Naive thymus-derived CD4-positive, alpha-beta T cell (primary cell): ENCODE measurements at regions of chr6 and their contacts with region 1.

Region 1: DNA sequence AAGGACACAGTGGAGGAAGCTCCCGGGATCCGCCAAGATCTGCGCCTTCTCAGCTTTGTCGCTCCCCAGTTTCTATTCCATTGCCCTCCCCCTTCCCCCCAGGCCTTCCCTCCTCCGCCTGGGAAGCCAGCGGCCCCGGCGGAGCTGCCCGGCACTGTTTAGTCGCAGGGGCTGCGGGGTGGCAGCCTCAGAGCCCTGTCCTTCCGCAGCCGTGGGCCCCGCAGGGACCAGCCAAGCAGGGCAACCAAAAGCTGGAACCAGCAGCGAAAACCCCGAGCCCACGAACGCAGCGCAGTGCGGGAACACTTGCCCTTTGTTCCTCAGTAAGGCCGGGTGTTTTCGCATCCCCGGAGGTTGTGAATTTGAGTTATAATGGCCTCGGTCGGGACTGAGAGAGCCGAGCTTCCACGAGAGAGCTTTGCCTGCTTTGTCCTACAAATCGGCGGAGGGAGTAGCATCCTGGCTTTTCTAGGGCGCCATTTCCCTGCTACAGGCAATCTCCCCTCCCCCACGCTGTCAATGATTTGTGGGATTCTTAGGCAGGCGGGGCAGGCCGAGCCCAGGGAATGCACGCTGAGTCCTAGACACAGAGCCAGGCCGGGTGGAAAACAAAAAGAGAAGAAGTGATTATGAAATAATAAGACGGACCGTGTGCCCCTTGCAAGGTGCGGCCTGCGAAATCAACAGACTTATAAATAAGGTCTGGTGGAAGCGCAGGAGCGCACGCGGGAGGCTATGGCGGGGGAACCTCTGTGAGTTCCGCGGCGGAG is 4.0 kb upstream of the TUBB2B start:
- DNase-seq: peak in 2 of 9 donors; percentile 11 to 20
- ATAC-seq: no peak
- H3K4me3 ChIP-seq: peak overlapping the region; percentile 38
- H3K4me3 Mint-ChIP-seq: peak overlapping the region; percentile 26 to 92 (median 67)
- H3K27ac ChIP-seq: no peak overlapping the region
- H3K27ac Mint-ChIP-seq: no peak overlapping the region
- H3K4me1 ChIP-seq: peaks cover 38 to 45% of the 10 kb centered on the region in 2 donors
- H3K4me1 Mint-ChIP-seq: peaks cover 25 to 61% (median 42%) of the 10 kb centered on the region in 7 donors
- H3K27me3 ChIP-seq: peaks cover 26 to 49% of the 10 kb centered on the region in 2 donors
- H3K27me3 Mint-ChIP-seq: peaks cover 73 to 91% (median 88%) of the 10 kb centered on the region in 5 donors

Region 2: DNA sequence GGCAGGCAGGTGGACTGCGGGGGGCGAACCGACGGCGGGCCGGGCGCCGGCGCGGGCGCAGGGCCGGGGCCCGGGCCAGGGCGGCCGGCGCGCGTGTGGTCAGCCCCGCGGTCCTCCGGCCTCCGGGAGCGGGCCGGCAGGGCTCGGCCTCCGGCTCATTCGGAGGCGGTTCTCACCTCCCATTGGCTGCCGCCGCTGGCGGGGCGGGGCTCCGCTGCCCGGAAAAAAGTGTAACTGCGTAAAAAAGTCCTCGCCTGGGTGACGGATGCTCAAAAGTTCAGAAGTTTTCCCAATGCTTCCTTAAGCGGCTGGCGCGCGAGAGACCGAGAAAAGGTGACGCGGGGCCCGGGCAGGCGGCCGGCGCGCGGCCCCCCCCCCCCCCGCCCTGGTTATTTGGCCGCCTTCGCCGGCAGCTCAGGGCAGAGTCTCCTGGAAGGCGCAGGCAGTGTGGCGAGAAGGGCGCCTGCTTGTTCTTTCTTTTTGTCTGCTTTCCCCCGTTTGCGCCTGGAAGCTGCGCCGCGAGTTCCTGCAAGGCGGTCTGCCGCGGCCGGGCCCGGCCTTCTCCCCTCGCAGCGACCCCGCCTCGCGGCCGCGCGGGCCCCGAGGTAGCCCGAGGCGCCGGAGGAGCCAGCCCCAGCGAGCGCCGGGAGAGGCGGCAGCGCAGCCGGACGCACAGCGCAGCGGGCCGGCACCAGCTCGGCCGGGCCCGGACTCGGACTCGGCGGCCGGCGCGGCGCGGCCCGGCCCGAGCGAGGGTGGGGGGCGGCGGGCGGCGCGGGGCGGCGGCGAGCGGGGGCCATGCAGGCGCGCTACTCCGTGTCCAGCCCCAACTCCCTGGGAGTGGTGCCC is 1621.6 kb before region 1 on chr6 and contains the start of gene FOXC1:
- CTCF ChIA-PET with region 1: no interaction called
- POLR2A ChIA-PET with region 1: no interaction called
- intact Hi-C with region 1: loop called in 1 of 2 experiments (anchors 2 kb)
- DNase-seq: peak in 1 of 9 donors; percentile 61
- ATAC-seq: peak; percentile 54
- H3K4me3 ChIP-seq: peak within 1 kb of the TSS; percentile 26
- H3K4me3 Mint-ChIP-seq: peak within 1 kb of the TSS; percentile 75 to 88 (median 82)
- H3K27ac ChIP-seq: no peak within 1 kb of the TSS
- H3K27ac Mint-ChIP-seq: peak within 1 kb of the TSS in 1 of 9 donors; percentile 84
- H3K4me1 ChIP-seq: peaks cover 22 to 27% of the 10 kb centered on the region in 2 donors
- H3K4me1 Mint-ChIP-seq: peaks cover 35 to 65% (median 55%) of the 10 kb centered on the region in 7 donors
- H3K27me3 ChIP-seq: peaks cover 20 to 36% of the 10 kb centered on the region in 2 donors
- H3K27me3 Mint-ChIP-seq: peaks cover 55 to 67% (median 65%) of the 10 kb centered on the region in 5 donors
- total RNA-seq, gene FOXC1: not detected

Region 3: GRCh38 chr6:3068329-3069214 is 162.9 kb before region 1 on chr6 and contains the start of gene RIPK1:
- CTCF ChIA-PET with region 1: no interaction called
- POLR2A ChIA-PET with region 1: no interaction called
- intact Hi-C with region 1: no loop called
- DNase-seq: peak; percentile 92 to 98 (median 95)
- ATAC-seq: peak; percentile 88
- H3K4me3 ChIP-seq: peak within 1 kb of the TSS; percentile 86
- H3K4me3 Mint-ChIP-seq: peak within 1 kb of the TSS; percentile 91 to 99 (median 96)
- H3K27ac ChIP-seq: peak within 1 kb of the TSS; percentile 99
- H3K27ac Mint-ChIP-seq: peak within 1 kb of the TSS; percentile 92 to 99 (median 98)
- H3K4me1 ChIP-seq: peaks cover 23% of the 10 kb centered on the region in 2 donors
- H3K4me1 Mint-ChIP-seq: peaks cover 41 to 83% (median 69%) of the 10 kb centered on the region in 7 donors
- H3K27me3 ChIP-seq: no peaks in the 10 kb centered on the region
- H3K27me3 Mint-ChIP-seq: no peaks in the 10 kb centered on the region
- total RNA-seq, gene RIPK1: 20.3 to 34.8 (median 32.4) TPM

Region 4: GRCh38 chr6:3144571-3144970 is 86.9 kb before region 1 on chr6:
- CTCF ChIA-PET with region 1: no interaction called
- POLR2A ChIA-PET with region 1: interaction called, 7 read pairs
- intact Hi-C with region 1: loop called in 1 of 2 experiments (anchors 5 kb)
- DNase-seq: no peak
- ATAC-seq: no peak
- H3K4me3 ChIP-seq: no peak overlapping the region
- H3K4me3 Mint-ChIP-seq: no peak overlapping the region
- H3K27ac ChIP-seq: no peak overlapping the region
- H3K27ac Mint-ChIP-seq: no peak overlapping the region
- H3K4me1 ChIP-seq: no peaks in the 10 kb centered on the region
- H3K4me1 Mint-ChIP-seq: peaks cover 0 to 6% (median 0%) of the 10 kb centered on the region in 7 donors
- H3K27me3 ChIP-seq: no peaks in the 10 kb centered on the region
- H3K27me3 Mint-ChIP-seq: no peaks in the 10 kb centered on the region

Region 5: GRCh38 chr6:3162565-3163247 is 68.7 kb before region 1 on chr6:
- CTCF ChIA-PET with region 1: no interaction called
- POLR2A ChIA-PET with region 1: no interaction called
- intact Hi-C with region 1: loop called (anchors 2 to 5 kb)
- DNase-seq: peak; percentile 29 to 62 (median 51)
- ATAC-seq: peak; percentile 63
- H3K4me3 ChIP-seq: peak overlapping the region; percentile 73
- H3K4me3 Mint-ChIP-seq: peak overlapping the region; percentile 78 to 87 (median 84)
- H3K27ac ChIP-seq: peak overlapping the region; percentile 70
- H3K27ac Mint-ChIP-seq: peak overlapping the region in 8 of 9 donors; percentile 37 to 92 (median 64)
- H3K4me1 ChIP-seq: peaks cover 19 to 22% of the 10 kb centered on the region in 2 donors
- H3K4me1 Mint-ChIP-seq: peaks cover 0 to 40% (median 36%) of the 10 kb centered on the region in 7 donors
- H3K27me3 ChIP-seq: no peaks in the 10 kb centered on the region
- H3K27me3 Mint-ChIP-seq: peaks cover 0 to 68% (median 6%) of the 10 kb centered on the region in 5 donors

Region 6: DNA sequence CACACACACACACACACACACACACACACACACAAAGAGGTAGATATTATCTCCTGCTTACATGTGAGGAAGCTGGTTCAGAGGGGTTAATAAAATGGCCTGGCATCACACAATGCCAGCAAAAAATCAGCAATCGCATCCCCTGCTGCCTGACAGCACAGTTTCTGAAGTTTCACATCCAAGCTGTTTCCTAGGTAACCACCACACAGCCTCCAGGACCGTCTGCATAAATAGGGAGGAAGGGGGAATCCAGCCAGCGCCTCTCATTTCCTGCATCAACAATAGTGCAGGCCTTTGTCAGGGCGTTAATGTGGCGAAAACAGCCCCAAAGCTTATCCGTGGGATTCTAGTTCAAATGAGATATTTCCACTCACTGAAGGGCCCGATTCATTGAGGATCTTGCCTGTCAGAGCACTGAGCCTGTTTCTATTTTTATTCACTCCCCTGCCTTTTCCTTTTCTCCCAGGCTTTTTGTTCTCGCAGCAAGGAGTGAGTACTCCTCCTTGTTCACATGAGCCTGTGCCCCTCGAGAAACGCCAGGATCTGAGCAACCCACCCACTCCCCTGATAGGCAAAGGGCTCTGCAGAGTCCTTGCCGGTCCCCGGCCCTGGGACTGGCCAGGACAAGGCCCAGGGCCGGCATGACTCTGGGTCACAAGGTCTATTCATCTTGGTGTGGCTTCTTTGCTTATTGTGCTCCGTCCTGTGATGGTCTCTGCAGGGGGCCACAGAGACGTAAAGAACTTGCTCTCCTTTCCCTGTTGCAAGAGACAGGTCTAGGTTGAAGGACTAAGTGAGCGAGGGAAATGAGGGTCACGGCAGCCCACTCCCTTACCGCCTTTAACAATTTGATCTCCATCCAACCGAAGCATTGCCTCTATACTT is 36.7 kb before region 1 on chr6:
- CTCF ChIA-PET with region 1: no interaction called
- POLR2A ChIA-PET with region 1: no interaction called
- intact Hi-C with region 1: no loop called
- DNase-seq: no peak
- ATAC-seq: no peak
- H3K4me3 ChIP-seq: no peak overlapping the region
- H3K4me3 Mint-ChIP-seq: no peak overlapping the region
- H3K27ac ChIP-seq: no peak overlapping the region
- H3K27ac Mint-ChIP-seq: no peak overlapping the region
- H3K4me1 ChIP-seq: no peaks in the 10 kb centered on the region
- H3K4me1 Mint-ChIP-seq: no peaks in the 10 kb centered on the region
- H3K27me3 ChIP-seq: peaks cover 0 to 3% of the 10 kb centered on the region in 2 donors
- H3K27me3 Mint-ChIP-seq: peaks cover 0 to 6% (median 5%) of the 10 kb centered on the region in 5 donors

Region 7: GRCh38 chr6:3251462-3252314 is 20.3 kb after region 1 on chr6:
- CTCF ChIA-PET with region 1: interaction called, 9 read pairs
- POLR2A ChIA-PET with region 1: interaction called, 4 read pairs
- intact Hi-C with region 1: loop called in 1 of 2 experiments (anchors 1 kb)
- DNase-seq: peak; percentile 58 to 82 (median 76)
- ATAC-seq: peak; percentile 94
- H3K4me3 ChIP-seq: no peak overlapping the region
- H3K4me3 Mint-ChIP-seq: peak overlapping the region in 5 of 10 donors; percentile 11 to 60 (median 40)
- H3K27ac ChIP-seq: no peak overlapping the region
- H3K27ac Mint-ChIP-seq: peak overlapping the region in 1 of 9 donors; percentile 54
- H3K4me1 ChIP-seq: peaks cover 7 to 8% of the 10 kb centered on the region in 2 donors
- H3K4me1 Mint-ChIP-seq: peaks cover 6 to 12% (median 7%) of the 10 kb centered on the region in 7 donors
- H3K27me3 ChIP-seq: no peaks in the 10 kb centered on the region
- H3K27me3 Mint-ChIP-seq: peaks cover 17 to 51% (median 27%) of the 10 kb centered on the region in 5 donors